CD4-positive, alpha-beta memory T cell (primary cell): ENCODE measurements at regions of chr2 and their contacts with region 1.

Region 1: GRCh38 chr2:68751397-68752339 is 17.1 kb downstream of the ARHGAP25 start:
- DNase-seq: peak; percentile 84 to 90 (median 85)
- H3K4me3 ChIP-seq: peak overlapping the region in 1 of 2 donors; percentile 5
- H3K4me3 Mint-ChIP-seq: peak overlapping the region in 7 of 8 donors; percentile 29 to 86 (median 62)
- H3K27ac ChIP-seq: peak overlapping the region; percentile 56
- H3K27ac Mint-ChIP-seq: peak overlapping the region; percentile 83 to 96 (median 94)
- H3K4me1 ChIP-seq: peaks cover 97% of the 10 kb centered on the region
- H3K4me1 Mint-ChIP-seq: peaks cover 73 to 96% (median 86%) of the 10 kb centered on the region in 4 donors
- H3K27me3 ChIP-seq: no peaks in the 10 kb centered on the region
- H3K27me3 Mint-ChIP-seq: no peaks in the 10 kb centered on the region

Region 2: GRCh38 chr2:68709421-68709911 is 42.2 kb before region 1 on chr2:
- CTCF ChIA-PET with region 1: interaction called, 745 read pairs
- POLR2A ChIA-PET with region 1: interaction called, 659 read pairs
- intact Hi-C with region 1: loop called (anchors 1 kb)
- DNase-seq: peak in 3 of 5 donors; percentile 29 to 47 (median 40)
- H3K4me3 ChIP-seq: no peak overlapping the region
- H3K4me3 Mint-ChIP-seq: peak overlapping the region in 3 of 8 donors; percentile 27 to 67 (median 30)
- H3K27ac ChIP-seq: peak overlapping the region; percentile 24
- H3K27ac Mint-ChIP-seq: peak overlapping the region; percentile 60 to 82 (median 68)
- H3K4me1 ChIP-seq: peaks cover 10% of the 10 kb centered on the region
- H3K4me1 Mint-ChIP-seq: peaks cover 13 to 37% (median 20%) of the 10 kb centered on the region in 4 donors
- H3K27me3 ChIP-seq: no peaks in the 10 kb centered on the region
- H3K27me3 Mint-ChIP-seq: no peaks in the 10 kb centered on the region

Region 3: DNA sequence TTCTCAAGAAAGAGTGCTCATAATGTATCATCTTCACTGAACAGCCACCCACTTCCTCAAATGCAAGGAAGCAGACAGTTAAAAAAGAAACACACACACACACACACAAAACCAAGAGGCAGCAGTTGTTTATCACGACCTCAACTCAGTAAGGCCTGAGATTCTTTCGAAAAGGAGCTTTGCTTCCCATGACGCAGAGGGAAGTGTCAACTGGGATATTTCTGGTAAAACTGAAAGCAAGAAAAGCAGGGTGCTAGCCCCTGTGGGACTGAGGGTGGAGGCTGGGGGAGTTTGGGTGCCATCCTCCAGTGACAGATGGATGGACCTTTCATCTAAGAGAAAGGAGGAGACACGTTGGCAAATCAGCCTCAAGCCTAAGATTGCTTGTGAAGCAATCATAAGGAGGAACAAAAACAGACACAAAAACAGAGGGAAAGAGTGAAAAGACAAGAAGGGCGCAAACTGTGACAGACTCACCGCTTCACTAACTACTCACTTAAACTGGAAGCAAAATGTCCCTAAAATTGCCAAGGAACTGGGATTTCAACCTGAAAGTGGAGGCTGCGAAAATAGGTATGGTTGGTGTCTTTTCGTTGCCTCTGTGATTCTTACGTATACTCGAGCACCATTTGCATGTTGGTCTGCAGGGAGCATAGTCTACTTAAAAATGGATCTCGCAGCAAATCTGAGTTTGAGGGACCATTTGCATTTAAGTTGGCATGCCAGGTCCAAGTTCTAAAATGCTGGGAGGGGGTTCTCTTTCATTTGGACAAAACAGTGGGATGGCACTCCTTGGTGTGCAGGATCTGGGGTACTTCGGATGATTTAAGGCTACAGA is 16.8 kb before region 1 on chr2 and contains the start of gene ARHGAP25:
- CTCF ChIA-PET with region 1: interaction called, 745 read pairs
- POLR2A ChIA-PET with region 1: interaction called, 659 read pairs
- intact Hi-C with region 1: loop called (anchors 1 kb)
- DNase-seq: peak; percentile 58 to 79 (median 61)
- H3K4me3 ChIP-seq: peak within 1 kb of the TSS; percentile 83 to 99
- H3K4me3 Mint-ChIP-seq: no peak within 1 kb of the TSS
- H3K27ac ChIP-seq: peak within 1 kb of the TSS; percentile 81
- H3K27ac Mint-ChIP-seq: no peak within 1 kb of the TSS
- H3K4me1 ChIP-seq: peaks cover 54% of the 10 kb centered on the region
- H3K4me1 Mint-ChIP-seq: peaks cover 23 to 44% (median 34%) of the 10 kb centered on the region in 4 donors
- H3K27me3 ChIP-seq: no peaks in the 10 kb centered on the region
- H3K27me3 Mint-ChIP-seq: no peaks in the 10 kb centered on the region
- total RNA-seq, gene ARHGAP25: 162 to 163 TPM

Region 4: DNA sequence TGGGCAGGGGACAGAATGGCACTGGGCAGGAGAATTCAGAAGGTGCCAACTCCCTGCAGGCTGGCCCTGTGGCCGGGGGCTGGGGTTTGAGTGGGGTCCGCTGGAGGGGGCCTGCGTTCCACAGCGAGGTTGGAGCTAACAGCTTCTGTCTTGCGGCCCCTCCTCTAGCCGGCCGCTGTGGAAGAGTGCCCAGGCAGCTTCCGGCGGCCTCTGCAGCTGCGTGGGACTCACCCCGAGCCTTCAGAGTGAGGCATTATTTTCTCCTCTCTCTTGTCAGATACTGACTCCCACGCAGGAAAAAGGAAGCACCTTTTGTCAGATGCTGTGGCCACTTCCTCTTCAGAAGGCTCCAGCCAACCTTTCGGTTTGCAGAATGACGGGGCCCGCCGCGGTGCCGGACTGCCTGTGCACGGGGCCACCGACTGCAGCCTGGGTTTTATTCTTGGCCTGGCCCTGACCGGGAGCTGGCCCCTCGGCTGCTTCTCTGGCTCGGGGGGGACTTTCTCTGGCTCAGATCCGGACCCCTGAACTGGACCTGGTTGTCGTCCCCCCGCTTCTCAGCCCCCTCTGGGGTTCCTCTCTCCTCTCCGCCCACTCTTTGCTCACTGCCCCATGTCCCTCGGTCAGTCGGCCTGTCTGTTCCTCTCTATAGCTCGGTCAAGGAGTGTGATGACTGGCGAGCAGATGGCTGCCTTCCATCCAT is 23.1 kb after region 1 on chr2:
- CTCF ChIA-PET with region 1: interaction called, 526 read pairs
- POLR2A ChIA-PET with region 1: interaction called, 728 read pairs
- intact Hi-C with region 1: loop called (anchors 1 kb)
- DNase-seq: peak; percentile 47 to 79 (median 51)
- H3K4me3 ChIP-seq: peak overlapping the region; percentile 57 to 63
- H3K4me3 Mint-ChIP-seq: peak overlapping the region; percentile 84 to 95 (median 87)
- H3K27ac ChIP-seq: peak overlapping the region; percentile 84
- H3K27ac Mint-ChIP-seq: peak overlapping the region; percentile 95 to 99 (median 97)
- H3K4me1 ChIP-seq: peaks cover 97% of the 10 kb centered on the region
- H3K4me1 Mint-ChIP-seq: peaks cover 78 to 90% (median 86%) of the 10 kb centered on the region in 4 donors
- H3K27me3 ChIP-seq: no peaks in the 10 kb centered on the region
- H3K27me3 Mint-ChIP-seq: no peaks in the 10 kb centered on the region

Region 5: GRCh38 chr2:68796294-68796905 is 44.7 kb after region 1 on chr2:
- CTCF ChIA-PET with region 1: interaction called, 34 read pairs
- POLR2A ChIA-PET with region 1: interaction called, 10 read pairs
- intact Hi-C with region 1: loop called (anchors 1 kb)
- DNase-seq: peak in 4 of 5 donors; percentile 17 to 35 (median 33)
- H3K4me3 ChIP-seq: peak overlapping the region in 1 of 2 donors; percentile 13
- H3K4me3 Mint-ChIP-seq: peak overlapping the region; percentile 2 to 88 (median 68)
- H3K27ac ChIP-seq: peak overlapping the region; percentile 47
- H3K27ac Mint-ChIP-seq: peak overlapping the region; percentile 78 to 94 (median 86)
- H3K4me1 ChIP-seq: peaks cover 81% of the 10 kb centered on the region
- H3K4me1 Mint-ChIP-seq: peaks cover 73 to 93% (median 81%) of the 10 kb centered on the region in 4 donors
- H3K27me3 ChIP-seq: no peaks in the 10 kb centered on the region
- H3K27me3 Mint-ChIP-seq: no peaks in the 10 kb centered on the region

Region 6: DNA sequence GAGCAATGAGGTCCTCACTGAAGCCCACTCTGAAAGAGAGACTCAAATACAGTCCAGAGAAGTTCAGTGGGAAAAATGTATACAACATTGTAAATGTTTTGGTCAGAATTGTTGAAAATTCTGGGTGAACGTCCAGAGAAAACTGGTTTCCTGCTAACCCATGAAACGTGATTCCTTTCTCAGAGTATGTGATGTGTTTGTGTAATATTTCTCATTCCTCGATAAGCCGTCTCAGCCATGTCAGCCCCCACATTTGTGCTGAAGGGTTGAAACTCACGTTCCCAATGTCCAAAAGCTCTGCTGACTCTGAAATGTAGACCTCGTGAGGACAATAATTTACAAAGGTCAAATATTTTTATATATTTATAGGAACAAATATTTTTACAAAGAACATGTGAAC is 67.9 kb after region 1 on chr2:
- CTCF ChIA-PET with region 1: interaction called, 18 read pairs
- POLR2A ChIA-PET with region 1: interaction called, 4 read pairs
- intact Hi-C with region 1: no loop called
- DNase-seq: no peak
- H3K4me3 ChIP-seq: no peak overlapping the region
- H3K4me3 Mint-ChIP-seq: no peak overlapping the region
- H3K27ac ChIP-seq: no peak overlapping the region
- H3K27ac Mint-ChIP-seq: peak overlapping the region in 6 of 7 donors; percentile 29 to 87 (median 54)
- H3K4me1 ChIP-seq: peaks cover 4% of the 10 kb centered on the region
- H3K4me1 Mint-ChIP-seq: peaks cover 14 to 28% (median 14%) of the 10 kb centered on the region in 4 donors
- H3K27me3 ChIP-seq: no peaks in the 10 kb centered on the region
- H3K27me3 Mint-ChIP-seq: no peaks in the 10 kb centered on the region

Region 7: DNA sequence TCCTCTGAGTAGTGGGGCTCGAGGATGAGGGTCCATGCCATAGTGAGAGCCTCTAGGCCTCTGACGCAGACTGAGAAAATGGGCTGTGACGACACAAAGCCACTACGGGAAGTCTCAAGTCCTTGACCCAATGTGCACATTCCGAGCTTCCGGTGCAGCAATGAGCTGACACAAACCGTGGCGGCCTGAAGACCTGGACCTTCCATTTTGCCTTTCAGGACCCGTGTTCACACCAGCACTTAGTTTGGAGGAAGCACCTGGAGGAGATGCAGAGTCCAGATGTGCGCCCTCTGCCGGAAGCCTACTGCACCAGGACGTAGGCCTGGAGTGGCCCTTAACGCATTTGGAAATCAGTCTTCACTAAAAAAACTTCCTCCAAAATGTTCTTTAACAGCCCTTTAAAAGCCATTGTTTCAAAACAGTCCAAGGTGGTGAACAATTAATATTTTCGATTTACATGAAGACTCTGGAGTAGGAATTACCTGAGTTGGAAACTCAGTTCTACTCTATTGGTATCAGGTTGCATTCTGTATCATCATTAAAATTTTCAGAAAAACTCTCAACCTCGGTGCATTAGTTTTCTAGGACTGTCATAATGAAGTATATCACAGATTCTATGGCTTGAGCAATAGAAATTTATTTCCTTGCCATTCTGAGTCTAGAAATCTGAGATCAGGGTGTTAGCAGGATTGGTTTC is 85.6 kb after region 1 on chr2:
- CTCF ChIA-PET with region 1: interaction called, 199 read pairs
- POLR2A ChIA-PET with region 1: interaction called, 15 read pairs
- intact Hi-C with region 1: loop called (anchors 1 kb)
- DNase-seq: peak; percentile 50 to 62 (median 54)
- H3K4me3 ChIP-seq: no peak overlapping the region
- H3K4me3 Mint-ChIP-seq: peak overlapping the region in 2 of 8 donors; percentile 24 to 38
- H3K27ac ChIP-seq: no peak overlapping the region
- H3K27ac Mint-ChIP-seq: peak overlapping the region in 3 of 7 donors; percentile 47 to 66 (median 60)
- H3K4me1 ChIP-seq: peaks cover 26% of the 10 kb centered on the region
- H3K4me1 Mint-ChIP-seq: peaks cover 19 to 44% (median 31%) of the 10 kb centered on the region in 4 donors
- H3K27me3 ChIP-seq: no peaks in the 10 kb centered on the region
- H3K27me3 Mint-ChIP-seq: no peaks in the 10 kb centered on the region